K562 (cell line): ENCODE measurements at regions of chr17 and their contacts with region 1.

Region 1: DNA sequence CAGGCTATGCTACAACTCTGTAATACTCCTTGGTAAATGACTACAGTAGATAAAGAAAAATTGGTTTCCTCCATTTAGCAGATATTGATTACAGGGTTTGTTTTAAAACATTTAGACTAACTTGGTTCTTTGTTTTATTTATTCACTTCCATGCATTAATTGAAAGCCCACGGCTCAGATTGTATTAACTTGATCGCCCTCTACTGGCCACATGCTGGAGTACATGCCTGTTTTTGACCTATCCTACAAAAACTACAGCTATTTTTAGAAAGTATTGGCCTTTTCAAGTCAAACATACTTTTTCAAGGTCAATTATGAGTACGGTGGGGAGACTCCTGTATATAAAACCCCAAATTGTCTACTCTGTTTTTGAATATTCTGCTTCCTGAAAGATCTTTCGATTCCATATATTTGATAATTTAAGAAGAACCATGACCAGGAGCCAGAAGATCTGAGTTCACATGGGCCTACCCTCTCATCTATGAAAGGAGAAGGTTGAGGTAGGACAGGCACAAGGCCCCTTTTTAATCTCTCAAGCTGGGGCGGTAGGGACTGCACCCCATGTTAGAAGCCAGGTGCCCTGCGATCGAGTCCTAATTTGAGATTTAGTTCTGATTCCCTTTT is 51.8 kb downstream of the CA10 start:
- DNase-seq: peak; percentile 34 to 43 (median 41)
- ATAC-seq: no peak
- H3K4me3 ChIP-seq: no peak overlapping the region
- H3K27ac ChIP-seq: no peak overlapping the region
- H3K4me1 ChIP-seq: no peaks in the 10 kb centered on the region
- H3K27me3 ChIP-seq: no peaks in the 10 kb centered on the region
- CTCF ChIP-seq: peak; percentile 28 to 68 (median 57); a peak in 5 of 6 replicates
- EP300 ChIP-seq: no peak
- POLR2A ChIP-seq: no peak
- RAD21 ChIP-seq: peak; percentile 29 to 62; a peak in 3 of 4 replicates

Region 2: GRCh38 chr17:51764387-51764972 is 342.3 kb before region 1 on chr17:
- CTCF ChIA-PET with region 1: no interaction called
- POLR2A ChIA-PET with region 1: no interaction called
- in situ Hi-C with region 1: no loop called
- intact Hi-C with region 1: loop called (anchors 1 kb)
- DNase-seq: peak; percentile 46 to 64 (median 58)
- ATAC-seq: peak; percentile 95
- H3K4me3 ChIP-seq: no peak overlapping the region
- H3K27ac ChIP-seq: no peak overlapping the region
- H3K4me1 ChIP-seq: no peaks in the 10 kb centered on the region
- H3K27me3 ChIP-seq: no peaks in the 10 kb centered on the region
- CTCF ChIP-seq: peak; percentile 59 to 84 (median 78)
- EP300 ChIP-seq: no peak
- POLR2A ChIP-seq: no peak
- RAD21 ChIP-seq: peak; percentile 55 to 76

Region 3: GRCh38 chr17:52036416-52036815 is 70.3 kb before region 1 on chr17:
- CTCF ChIA-PET with region 1: no interaction called
- POLR2A ChIA-PET with region 1: no interaction called
- in situ Hi-C with region 1: no loop called
- intact Hi-C with region 1: no loop called
- DNase-seq: no peak
- ATAC-seq: no peak
- H3K4me3 ChIP-seq: no peak overlapping the region
- H3K27ac ChIP-seq: no peak overlapping the region
- H3K4me1 ChIP-seq: no peaks in the 10 kb centered on the region
- H3K27me3 ChIP-seq: no peaks in the 10 kb centered on the region
- CTCF ChIP-seq: no peak
- EP300 ChIP-seq: no peak
- POLR2A ChIP-seq: no peak
- RAD21 ChIP-seq: no peak

Region 4: GRCh38 chr17:52048137-52048898 is 58.4 kb before region 1 on chr17:
- CTCF ChIA-PET with region 1: no interaction called
- POLR2A ChIA-PET with region 1: no interaction called
- in situ Hi-C with region 1: no loop called
- intact Hi-C with region 1: no loop called
- DNase-seq: no peak
- ATAC-seq: no peak
- H3K4me3 ChIP-seq: no peak overlapping the region
- H3K27ac ChIP-seq: no peak overlapping the region
- H3K4me1 ChIP-seq: no peaks in the 10 kb centered on the region
- H3K27me3 ChIP-seq: no peaks in the 10 kb centered on the region
- CTCF ChIP-seq: no peak
- EP300 ChIP-seq: no peak
- POLR2A ChIP-seq: no peak
- RAD21 ChIP-seq: no peak